HCT116 (cell line): ENCODE measurements at regions of chr6 and their contacts with region 1.

Region 1: GRCh38 chr6:102114402-102114801 is 720.9 kb downstream of the GRIK2 start:
- DNase-seq: peak; percentile 6
- ATAC-seq: peak; percentile 75
- H3K4me3 ChIP-seq: no peak overlapping the region
- H3K27ac ChIP-seq: no peak overlapping the region
- H3K4me1 ChIP-seq: no peaks in the 10 kb centered on the region
- H3K27me3 ChIP-seq: no peaks in the 10 kb centered on the region
- CTCF ChIP-seq: peak; percentile 32 to 62 (median 47); a peak in 5 of 6 replicates
- POLR2A ChIP-seq: no peak
- RAD21 ChIP-seq: peak; percentile 54; the same call in 1 of the 2 replicates

Region 2: DNA sequence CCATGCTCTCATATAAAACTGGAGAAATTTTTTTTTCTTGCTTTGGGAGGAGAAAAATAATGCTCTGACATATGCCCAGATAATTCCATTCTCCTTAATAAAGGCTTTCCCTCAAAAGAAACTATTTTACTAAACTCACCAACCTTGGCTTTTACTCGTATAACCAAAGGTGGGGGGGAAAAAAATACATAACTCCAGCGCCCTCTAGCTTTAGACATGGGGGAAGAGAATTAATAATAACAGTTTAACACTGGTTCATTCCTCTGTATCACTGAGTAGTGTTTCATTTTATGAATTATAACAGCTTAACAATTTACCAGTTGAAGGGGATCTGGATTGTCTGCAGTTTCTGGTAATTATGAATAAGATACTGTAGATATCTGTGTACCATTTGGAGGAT is 505.2 kb after region 1 on chr6:
- CTCF ChIA-PET with region 1: no interaction called
- POLR2A ChIA-PET with region 1: no interaction called
- RAD21 ChIA-PET with region 1: no interaction called
- intact Hi-C with region 1: loop called (anchors 5 kb)
- DNase-seq: peak; percentile 1
- ATAC-seq: peak; percentile 69
- H3K4me3 ChIP-seq: no peak overlapping the region
- H3K27ac ChIP-seq: no peak overlapping the region
- H3K4me1 ChIP-seq: no peaks in the 10 kb centered on the region
- H3K27me3 ChIP-seq: no peaks in the 10 kb centered on the region
- CTCF ChIP-seq: peak; percentile 47 to 77 (median 56); a peak in 5 of 6 replicates
- POLR2A ChIP-seq: no peak
- RAD21 ChIP-seq: peak; percentile 73

Region 3: GRCh38 chr6:103122766-103123601 is 1008.6 kb after region 1 on chr6:
- CTCF ChIA-PET with region 1: no interaction called
- POLR2A ChIA-PET with region 1: no interaction called
- RAD21 ChIA-PET with region 1: no interaction called
- intact Hi-C with region 1: loop called (anchors 10 kb)
- DNase-seq: peak; percentile 69
- ATAC-seq: peak; percentile 98
- H3K4me3 ChIP-seq: no peak overlapping the region
- H3K27ac ChIP-seq: no peak overlapping the region
- H3K4me1 ChIP-seq: peaks cover 0 to 3% of the 10 kb centered on the region in 2 experiments; a peak in 1 of 4 replicates
- H3K27me3 ChIP-seq: no peaks in the 10 kb centered on the region
- CTCF ChIP-seq: peak; percentile 50 to 76 (median 65); a peak in 5 of 6 replicates
- POLR2A ChIP-seq: no peak
- RAD21 ChIP-seq: peak; percentile 86